IMR-90 (cell line): ENCODE measurements at regions of chr19 and their contacts with region 1.

Region 1: DNA sequence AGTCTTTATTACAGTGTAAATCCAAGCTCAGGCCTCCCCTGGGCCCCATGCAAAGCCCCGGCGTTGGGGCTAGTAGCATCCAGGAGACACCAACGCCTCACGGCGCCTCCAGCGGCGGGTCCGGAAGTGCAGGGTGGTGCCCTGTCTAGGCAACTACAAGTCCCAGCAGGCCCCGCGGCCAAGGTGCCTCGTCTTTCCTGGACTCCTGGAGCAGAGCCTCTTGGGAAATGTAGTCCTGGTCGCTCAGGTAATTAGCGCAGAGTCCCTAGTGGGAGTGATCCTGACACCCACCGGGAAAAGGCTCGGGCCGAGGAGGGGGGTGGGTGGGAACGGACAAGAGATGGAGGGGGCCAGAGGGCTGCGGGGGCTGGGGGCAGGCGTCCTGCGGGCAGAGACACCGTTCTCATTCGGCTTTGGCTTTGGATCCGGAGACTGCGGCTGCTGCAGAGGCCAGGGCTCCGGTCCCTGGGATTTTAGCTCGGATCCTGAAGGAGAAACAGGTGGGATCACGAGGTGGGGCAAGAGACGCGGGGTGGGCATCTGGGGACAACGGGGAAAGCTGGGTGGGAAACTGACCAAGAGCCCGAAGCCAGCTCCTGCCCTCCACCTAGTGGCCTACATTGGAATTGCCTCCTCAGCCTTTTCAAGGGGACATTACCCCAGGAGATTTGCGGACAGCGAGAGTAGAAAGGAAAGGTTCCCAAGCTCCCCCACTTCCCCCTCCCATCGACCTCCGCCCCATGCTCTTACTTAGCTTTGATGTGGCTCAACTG is 11.4 kb downstream of the RTN2 start:
- DNase-seq: peak; percentile 90
- ATAC-seq: peak; percentile 100
- H3K4me3 ChIP-seq: peak overlapping the region; percentile 57
- H3K27ac ChIP-seq: peak overlapping the region; percentile 47; the same call in 1 of the 2 replicates
- H3K4me1 ChIP-seq: no peaks in the 10 kb centered on the region
- H3K27me3 ChIP-seq: no peaks in the 10 kb centered on the region
- CTCF ChIP-seq: peak; percentile 83
- POLR2A ChIP-seq: no peak
- RAD21 ChIP-seq: peak; percentile 69

Region 2: DNA sequence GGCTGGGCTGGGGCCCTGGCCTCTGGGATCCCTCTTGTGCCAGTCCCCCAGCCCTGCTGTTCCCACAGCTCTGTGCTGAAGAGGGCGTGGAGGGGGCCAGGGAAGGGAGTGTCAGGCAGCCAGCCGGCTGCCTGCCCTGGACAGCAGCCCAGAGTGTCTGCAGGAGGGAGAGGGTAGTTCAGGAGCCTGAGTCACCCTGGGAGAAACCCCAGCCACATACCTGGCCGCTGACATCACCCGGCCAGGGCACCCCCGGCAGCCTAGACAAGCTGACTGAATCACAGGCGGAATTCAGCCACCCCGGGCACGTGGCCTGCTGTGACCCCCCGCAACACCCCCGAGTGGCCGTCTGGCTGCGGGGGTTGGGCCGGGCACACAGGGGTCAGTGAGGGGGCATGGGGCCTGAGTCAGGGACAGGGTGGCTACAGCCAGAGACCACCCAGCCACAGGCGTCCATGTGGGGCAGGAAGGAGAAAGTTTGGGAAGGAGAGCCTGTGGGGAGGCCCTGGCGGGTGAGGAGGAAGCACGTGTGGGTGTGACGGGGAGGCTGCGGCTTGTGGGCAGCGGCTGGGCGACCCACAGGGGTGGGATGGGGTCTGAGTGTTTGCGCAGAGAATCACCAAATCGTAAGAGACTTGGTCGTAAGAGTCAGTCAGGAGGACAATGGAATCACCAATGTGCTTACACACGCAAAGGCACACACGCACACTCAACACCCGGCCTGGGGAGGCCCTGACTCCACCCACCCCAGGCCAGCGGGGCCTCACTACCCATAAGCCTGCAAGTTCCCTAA is 29.6 kb before region 1 on chr19:
- CTCF ChIA-PET with region 1: no interaction called
- POLR2A ChIA-PET with region 1: interaction called, 17 read pairs
- dilution Hi-C with region 1: no loop called
- in situ Hi-C with region 1: no loop called
- intact Hi-C with region 1: no loop called
- DNase-seq: peak; percentile 99
- ATAC-seq: peak; percentile 89
- H3K4me3 ChIP-seq: 0 out of 2 replicates have a peak overlapping the region, but pooled peaks have one; percentile 1
- H3K27ac ChIP-seq: peak overlapping the region; percentile 66
- H3K4me1 ChIP-seq: peaks cover 11% of the 10 kb centered on the region
- H3K27me3 ChIP-seq: no peaks in the 10 kb centered on the region
- CTCF ChIP-seq: no peak
- POLR2A ChIP-seq: no peak; the same call in 1 of the 2 replicates
- RAD21 ChIP-seq: 0 out of 2 replicates have a peak, but pooled peaks have one; percentile 29

Region 3: GRCh38 chr19:45636275-45636674 is 150.8 kb after region 1 on chr19:
- CTCF ChIA-PET with region 1: no interaction called
- POLR2A ChIA-PET with region 1: no interaction called
- dilution Hi-C with region 1: no loop called
- in situ Hi-C with region 1: no loop called
- intact Hi-C with region 1: no loop called
- DNase-seq: no peak
- ATAC-seq: no peak
- H3K4me3 ChIP-seq: no peak overlapping the region
- H3K27ac ChIP-seq: no peak overlapping the region
- H3K4me1 ChIP-seq: peaks cover 15% of the 10 kb centered on the region
- H3K27me3 ChIP-seq: no peaks in the 10 kb centered on the region
- CTCF ChIP-seq: no peak
- POLR2A ChIP-seq: no peak
- RAD21 ChIP-seq: no peak